Left ventricle myocardium inferior (tissue), 1 donor: ENCODE measurements at regions of chr5 and their contacts with region 1.

Region 1: DNA sequence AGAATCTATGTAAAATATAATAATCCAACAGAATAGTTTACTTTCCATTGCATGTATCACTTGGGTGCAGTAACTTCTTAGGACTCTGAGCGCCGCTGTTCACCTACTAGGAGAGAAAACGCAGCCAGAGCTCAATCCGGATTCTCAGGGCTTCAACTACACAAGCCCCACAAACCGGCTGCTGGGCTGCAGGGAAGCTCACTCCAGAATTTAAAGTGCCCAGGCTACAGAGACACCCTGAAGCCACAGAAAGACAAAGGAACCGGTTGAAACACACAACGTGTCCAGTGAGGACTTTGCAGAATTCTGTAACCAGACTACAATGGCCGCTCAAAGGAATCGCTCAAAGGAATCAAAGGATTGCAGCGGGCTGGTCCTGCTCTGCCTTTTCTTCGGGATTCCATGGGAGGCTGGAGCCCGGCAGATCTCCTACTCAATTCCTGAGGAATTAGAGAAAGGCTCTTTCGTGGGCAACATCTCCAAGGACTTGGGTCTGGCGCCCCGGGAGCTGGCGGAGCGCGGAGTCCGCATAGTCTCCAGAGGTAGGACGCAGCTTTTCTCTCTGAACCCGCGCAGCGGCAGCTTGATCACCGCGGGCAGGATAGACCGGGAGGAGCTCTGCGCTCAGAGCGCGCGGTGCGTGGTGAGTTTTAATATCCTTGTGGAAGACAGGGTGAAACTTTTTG is at the start of gene PCDHGA10:
- DNase-seq: no peak
- H3K4me3 ChIP-seq: peak within 1 kb of the TSS; percentile 54
- H3K27ac ChIP-seq: peak within 1 kb of the TSS; percentile 50
- H3K4me1 ChIP-seq: peaks cover 46% of the 10 kb centered on the region
- H3K27me3 ChIP-seq: no peaks in the 10 kb centered on the region
- CTCF ChIP-seq: peak; percentile 66
- total RNA-seq, gene PCDHGA10: 5.0 TPM

Region 2: DNA sequence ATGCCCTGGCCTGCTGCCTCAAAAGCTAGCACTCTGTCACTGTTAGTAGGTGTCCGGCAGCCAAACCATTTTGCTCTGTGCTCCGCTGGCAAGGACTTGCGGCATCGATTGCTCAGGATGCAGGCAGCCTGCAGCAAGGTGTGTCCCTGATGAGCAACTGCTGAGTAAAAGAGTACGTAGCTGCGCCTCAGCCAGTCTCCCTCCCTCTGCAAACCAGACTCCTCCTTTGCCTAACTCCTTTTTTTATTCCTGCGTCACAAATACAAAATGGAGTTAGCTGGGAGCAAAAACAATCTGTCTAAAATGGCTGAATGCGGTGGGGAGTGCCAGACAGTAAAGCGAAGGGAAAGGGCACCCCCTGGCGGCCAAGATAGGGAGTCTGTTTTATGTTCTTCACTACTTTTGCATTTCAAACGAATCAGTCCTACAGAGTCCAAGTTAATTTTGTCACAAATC is 144.7 kb after region 1 on chr5:
- intact Hi-C with region 1: loop called (anchors 10 kb)
- DNase-seq: peak; percentile 89
- H3K4me3 ChIP-seq: peak overlapping the region; percentile 49
- H3K27ac ChIP-seq: peak overlapping the region; percentile 94
- H3K4me1 ChIP-seq: peaks cover 42% of the 10 kb centered on the region
- H3K27me3 ChIP-seq: no peaks in the 10 kb centered on the region
- CTCF ChIP-seq: peak; percentile 92

Region 3: DNA sequence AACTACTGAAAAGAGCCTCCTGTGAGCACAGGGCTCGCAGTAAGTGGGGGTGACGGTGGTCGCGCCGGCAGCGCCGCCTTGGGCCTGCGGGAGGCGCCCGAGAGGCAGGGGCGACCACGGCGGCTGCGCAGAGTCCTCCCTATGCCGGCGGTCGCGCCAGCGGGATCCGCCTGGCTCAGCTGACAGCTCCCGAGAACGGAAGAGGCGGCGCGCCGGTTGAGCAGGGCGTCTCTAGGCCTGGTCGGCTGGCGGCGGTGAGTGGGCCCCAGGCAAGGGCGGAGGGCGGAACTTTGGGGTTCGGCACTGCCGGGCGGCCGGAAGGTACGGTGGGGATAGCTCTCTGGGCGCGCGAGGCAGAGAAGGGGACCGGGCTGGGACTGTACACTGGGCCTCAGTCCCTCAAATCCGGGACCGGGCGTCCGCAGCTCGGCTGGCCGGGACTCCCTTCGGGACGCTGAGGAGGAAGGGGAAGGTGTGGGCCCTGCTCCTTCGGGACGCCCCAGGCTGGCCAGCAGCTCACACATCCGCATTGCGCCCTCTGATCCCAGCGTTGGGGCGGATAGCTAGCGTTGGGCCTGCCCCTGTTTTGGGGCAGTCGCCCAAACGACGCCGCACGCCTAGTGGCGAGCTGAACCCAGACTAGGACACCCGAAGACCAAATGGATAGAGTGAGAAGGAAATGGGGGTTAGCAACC is 556.1 kb after region 1 on chr5 and contains the start of gene RNF14:
- intact Hi-C with region 1: no loop called
- DNase-seq: peak; percentile 94
- H3K4me3 ChIP-seq: peak within 1 kb of the TSS; percentile 89
- H3K27ac ChIP-seq: peak within 1 kb of the TSS; percentile 99
- H3K4me1 ChIP-seq: peaks cover 48% of the 10 kb centered on the region
- H3K27me3 ChIP-seq: no peaks in the 10 kb centered on the region
- CTCF ChIP-seq: peak; percentile 98
- total RNA-seq, gene RNF14: 120 TPM